T-cell (primary cell): ENCODE measurements at regions of chrX and their contacts with region 1.

Region 1: GRCh38 chrX:70433848-70434351 is 10.7 kb upstream of the DLG3 start:
- DNase-seq: peak; percentile 41 to 87 (median 67)
- ATAC-seq: peak; percentile 80 to 86 (median 84)
- H3K4me3 ChIP-seq: peak overlapping the region; percentile 72 to 86
- H3K4me3 Mint-ChIP-seq: peak overlapping the region; percentile 86 to 90 (median 87)
- H3K27ac ChIP-seq: peak overlapping the region; percentile 82
- H3K27ac Mint-ChIP-seq: peak overlapping the region; percentile 81 to 88
- H3K4me1 ChIP-seq: peaks cover 0 to 17% of the 10 kb centered on the region in 2 experiments
- H3K4me1 Mint-ChIP-seq: peaks cover 7 to 24% (median 10%) of the 10 kb centered on the region in 3 donors
- H3K27me3 ChIP-seq: peaks cover 0 to 8% of the 10 kb centered on the region in 2 experiments
- H3K27me3 Mint-ChIP-seq: peaks cover 0 to 34% of the 10 kb centered on the region in 2 donors

Region 2: DNA sequence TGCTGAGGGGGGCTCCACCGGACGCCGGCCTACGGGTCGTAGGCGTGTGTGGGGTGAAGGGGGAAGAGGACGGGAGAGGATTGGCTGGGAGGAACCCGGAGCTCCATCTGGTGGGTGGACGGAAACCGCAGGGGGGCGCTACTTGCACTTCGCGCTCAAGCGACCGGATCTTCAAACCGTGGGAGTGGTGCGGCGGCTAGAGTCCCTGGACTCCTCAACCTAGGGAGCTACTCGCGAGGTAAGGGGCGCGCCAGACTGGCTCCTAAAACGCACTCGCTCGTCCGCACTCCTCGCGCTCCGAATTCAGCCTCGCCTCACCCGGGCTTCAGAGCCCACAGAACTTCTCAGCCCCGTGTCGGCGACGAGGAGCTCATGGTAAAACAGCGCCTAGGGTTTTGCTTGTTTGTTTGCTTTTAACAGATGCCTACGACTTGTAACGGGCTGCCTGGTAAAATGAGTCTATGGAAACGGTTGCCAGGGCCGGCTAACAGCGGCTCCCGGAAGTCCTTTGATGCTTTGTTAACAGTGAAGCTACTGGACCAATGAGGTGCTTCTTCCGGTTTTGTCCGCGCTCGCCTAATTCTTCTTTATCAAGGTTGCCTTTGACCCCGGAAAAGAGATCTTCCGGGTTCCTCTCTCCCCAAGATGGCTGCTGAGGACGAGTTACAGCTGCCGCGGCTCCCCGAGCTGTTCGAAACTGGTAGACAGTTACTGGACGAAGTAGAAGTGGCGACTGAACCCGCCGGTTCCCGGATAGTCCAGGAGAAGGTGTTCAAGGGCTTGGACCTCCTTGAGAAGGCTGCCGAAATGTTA is 300.4 kb before region 1 on chrX and contains the start of gene IGBP1:
- CTCF ChIA-PET with region 1: interaction called in 1 of 2 experiments, 10 read pairs
- POLR2A ChIA-PET with region 1: no interaction called
- DNase-seq: peak; percentile 40 to 90 (median 79)
- ATAC-seq: peak; percentile 86 to 89 (median 86)
- H3K4me3 ChIP-seq: peak within 1 kb of the TSS; percentile 77 to 90
- H3K4me3 Mint-ChIP-seq: peak within 1 kb of the TSS; percentile 86 to 98 (median 98)
- H3K27ac ChIP-seq: peak within 1 kb of the TSS; percentile 83
- H3K27ac Mint-ChIP-seq: peak within 1 kb of the TSS; percentile 97
- H3K4me1 ChIP-seq: peaks cover 10 to 17% of the 10 kb centered on the region in 2 experiments
- H3K4me1 Mint-ChIP-seq: peaks cover 26 to 47% (median 28%) of the 10 kb centered on the region in 3 donors
- H3K27me3 ChIP-seq: no peaks in the 10 kb centered on the region
- H3K27me3 Mint-ChIP-seq: peaks cover 0 to 11% of the 10 kb centered on the region in 2 donors
- total RNA-seq, gene IGBP1: 50.8 to 61.2 (median 59.1) TPM

Region 3: DNA sequence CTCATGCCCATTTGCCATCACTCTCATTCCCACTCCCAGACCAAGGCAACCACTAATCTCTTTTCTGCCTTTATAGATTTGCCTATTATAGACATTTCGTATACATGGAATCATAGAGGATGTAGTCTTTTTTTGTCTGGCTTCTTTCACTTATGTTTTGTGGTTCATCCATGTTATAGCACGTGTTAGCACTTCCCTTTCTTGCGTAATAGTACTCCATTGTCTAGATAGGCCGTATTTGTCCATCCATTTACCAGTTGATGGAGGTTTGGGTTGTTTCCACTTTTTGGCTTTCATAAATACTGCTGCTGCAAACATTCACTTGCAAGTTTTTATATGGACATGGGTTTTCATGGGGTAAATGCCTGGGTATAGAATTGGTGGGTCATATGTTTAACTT is 95.6 kb before region 1 on chrX:
- CTCF ChIA-PET with region 1: no interaction called
- POLR2A ChIA-PET with region 1: no interaction called
- DNase-seq: no peak
- ATAC-seq: no peak
- H3K4me3 ChIP-seq: no peak overlapping the region
- H3K4me3 Mint-ChIP-seq: no peak overlapping the region
- H3K27ac ChIP-seq: no peak overlapping the region
- H3K27ac Mint-ChIP-seq: no peak overlapping the region
- H3K4me1 ChIP-seq: no peaks in the 10 kb centered on the region
- H3K4me1 Mint-ChIP-seq: no peaks in the 10 kb centered on the region
- H3K27me3 ChIP-seq: no peaks in the 10 kb centered on the region
- H3K27me3 Mint-ChIP-seq: peaks cover 0 to 3% of the 10 kb centered on the region in 2 donors

Region 4: GRCh38 chrX:70446380-70447350 is 12.8 kb after region 1 on chrX:
- CTCF ChIA-PET with region 1: interaction called, 9 to 14 read pairs
- POLR2A ChIA-PET with region 1: interaction called in 1 of 2 experiments, 4 read pairs
- DNase-seq: no peak
- ATAC-seq: no peak
- H3K4me3 ChIP-seq: no peak overlapping the region
- H3K4me3 Mint-ChIP-seq: no peak overlapping the region
- H3K27ac ChIP-seq: no peak overlapping the region
- H3K27ac Mint-ChIP-seq: no peak overlapping the region
- H3K4me1 ChIP-seq: peaks cover 0 to 15% of the 10 kb centered on the region in 2 experiments
- H3K4me1 Mint-ChIP-seq: peaks cover 0 to 4% (median 2%) of the 10 kb centered on the region in 3 donors
- H3K27me3 ChIP-seq: peaks cover 6 to 25% of the 10 kb centered on the region in 2 experiments
- H3K27me3 Mint-ChIP-seq: peaks cover 24 to 25% of the 10 kb centered on the region in 2 donors